ENCODE measurements at regions of chr17 and their contacts with region 1.

Region 1: DNA sequence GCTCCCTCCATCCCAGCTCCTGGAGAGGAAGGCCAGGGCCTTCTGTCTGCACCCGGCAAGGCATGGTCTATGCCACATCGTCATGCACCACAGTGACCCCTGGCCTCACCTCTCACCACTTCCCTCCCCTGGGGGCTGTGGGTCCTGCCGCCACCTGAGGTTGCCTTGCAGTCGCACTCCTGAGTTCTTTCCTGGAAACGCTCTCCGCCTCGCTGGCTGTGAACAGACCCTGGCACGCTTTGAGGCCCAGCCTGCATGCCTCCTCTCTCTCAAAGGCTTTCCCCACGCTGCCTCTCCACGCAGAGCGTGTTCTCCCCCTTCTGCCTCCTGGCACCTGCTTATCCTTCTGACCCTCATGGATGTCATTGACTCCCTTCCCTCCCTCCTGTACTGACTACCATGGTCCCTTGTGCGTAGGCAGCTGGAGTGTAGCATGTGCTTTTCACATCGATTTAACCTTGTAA is 45.4 kb downstream of the SEC14L1 start:
- DNase-seq: no peak
- ATAC-seq: no peak; the same call in 1 of the 3 replicates
- H3K4me3 ChIP-seq: no peak overlapping the region
- H3K27ac ChIP-seq: peak overlapping the region; percentile 54
- H3K4me1 ChIP-seq: peaks cover 68% of the 10 kb centered on the region
- H3K27me3 ChIP-seq: no peaks in the 10 kb centered on the region
- CTCF ChIP-seq: no peak
- EP300 ChIP-seq: no peak
- POLR2A ChIP-seq: no peak
- RAD21 ChIP-seq: no peak

Region 2: GRCh38 chr17:77096570-77097214 is 89.5 kb before region 1 on chr17:
- CTCF ChIA-PET with region 1: interaction called, 3 read pairs
- POLR2A ChIA-PET with region 1: no interaction called
- RAD21 ChIA-PET with region 1: interaction called, 4 read pairs
- SMC1A ChIA-PET with region 1: interaction called, 5 read pairs
- in situ Hi-C with region 1: no loop called
- intact Hi-C with region 1: loop called (anchors 5 kb)
- DNase-seq: no peak
- ATAC-seq: peak; percentile 85
- H3K4me3 ChIP-seq: no peak overlapping the region
- H3K27ac ChIP-seq: 0 out of 2 replicates have a peak overlapping the region, but pooled peaks have one; percentile 33
- H3K4me1 ChIP-seq: peaks cover 4% of the 10 kb centered on the region
- H3K27me3 ChIP-seq: no peaks in the 10 kb centered on the region
- CTCF ChIP-seq: peak; percentile 74 to 83 (median 76)
- EP300 ChIP-seq: no peak
- POLR2A ChIP-seq: no peak
- RAD21 ChIP-seq: peak; percentile 91

Region 3: GRCh38 chr17:77140166-77140878 is 45.9 kb before region 1 on chr17:
- CTCF ChIA-PET with region 1: interaction called, 6 read pairs
- POLR2A ChIA-PET with region 1: interaction called, 16 read pairs
- RAD21 ChIA-PET with region 1: interaction called, 28 read pairs
- SMC1A ChIA-PET with region 1: interaction called, 21 read pairs
- in situ Hi-C with region 1: no loop called
- intact Hi-C with region 1: no loop called
- DNase-seq: peak; percentile 93
- ATAC-seq: peak; percentile 83
- H3K4me3 ChIP-seq: peak overlapping the region; percentile 34
- H3K27ac ChIP-seq: peak overlapping the region; percentile 84
- H3K4me1 ChIP-seq: peaks cover 17% of the 10 kb centered on the region
- H3K27me3 ChIP-seq: no peaks in the 10 kb centered on the region
- CTCF ChIP-seq: no peak
- EP300 ChIP-seq: peak; percentile 58 to 70; a peak in 2 of 4 replicates
- POLR2A ChIP-seq: peak; percentile 88
- RAD21 ChIP-seq: peak; percentile 12; the same call in 1 of the 2 replicates

Region 4: DNA sequence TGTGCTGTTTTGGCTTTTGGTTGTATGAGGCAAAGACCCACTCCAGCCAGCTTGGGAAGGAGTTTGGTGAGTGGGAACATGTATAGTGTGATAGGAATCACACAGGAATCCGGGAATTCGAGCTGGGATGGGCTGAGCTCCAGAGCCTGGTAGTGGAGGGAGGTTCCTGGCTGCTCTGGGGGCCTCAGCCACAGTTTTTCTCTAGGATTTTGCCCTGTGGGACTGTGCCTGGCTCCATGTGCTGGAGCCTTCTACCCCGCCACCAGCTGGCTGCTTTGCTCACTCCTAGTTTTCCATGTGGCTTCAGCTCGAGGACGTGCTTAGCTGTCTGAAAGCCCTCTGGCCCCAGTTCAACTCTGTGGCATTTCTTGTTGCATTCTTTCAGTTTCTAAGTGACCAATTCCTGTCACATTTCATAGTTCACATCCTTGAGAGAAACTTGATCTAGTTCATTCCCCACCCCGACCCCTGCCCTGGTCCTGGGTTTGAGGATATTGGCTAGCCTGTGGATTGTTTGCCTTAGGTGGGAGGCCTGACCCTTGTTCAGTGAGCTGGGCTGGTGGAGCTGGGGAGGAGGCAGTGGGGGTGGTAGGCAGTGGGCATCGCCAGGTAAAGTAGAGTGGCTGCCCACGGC is 40.4 kb before region 1 on chr17:
- CTCF ChIA-PET with region 1: interaction called, 6 read pairs
- POLR2A ChIA-PET with region 1: interaction called, 16 read pairs
- RAD21 ChIA-PET with region 1: interaction called, 28 read pairs
- SMC1A ChIA-PET with region 1: interaction called, 21 read pairs
- in situ Hi-C with region 1: no loop called
- intact Hi-C with region 1: loop called (anchors 2 kb)
- DNase-seq: peak; percentile 71
- ATAC-seq: peak; percentile 63
- H3K4me3 ChIP-seq: peak overlapping the region; percentile 69
- H3K27ac ChIP-seq: peak overlapping the region; percentile 97
- H3K4me1 ChIP-seq: peaks cover 43% of the 10 kb centered on the region
- H3K27me3 ChIP-seq: no peaks in the 10 kb centered on the region
- CTCF ChIP-seq: peak in 2 of 3 experiments; percentile 8 to 22; a peak in 1 of 6 replicates
- EP300 ChIP-seq: peak in 1 of 2 experiments; percentile 56; a peak in 2 of 4 replicates
- POLR2A ChIP-seq: 0 out of 2 replicates have a peak, but pooled peaks have one; percentile 32
- RAD21 ChIP-seq: no peak

Region 5: DNA sequence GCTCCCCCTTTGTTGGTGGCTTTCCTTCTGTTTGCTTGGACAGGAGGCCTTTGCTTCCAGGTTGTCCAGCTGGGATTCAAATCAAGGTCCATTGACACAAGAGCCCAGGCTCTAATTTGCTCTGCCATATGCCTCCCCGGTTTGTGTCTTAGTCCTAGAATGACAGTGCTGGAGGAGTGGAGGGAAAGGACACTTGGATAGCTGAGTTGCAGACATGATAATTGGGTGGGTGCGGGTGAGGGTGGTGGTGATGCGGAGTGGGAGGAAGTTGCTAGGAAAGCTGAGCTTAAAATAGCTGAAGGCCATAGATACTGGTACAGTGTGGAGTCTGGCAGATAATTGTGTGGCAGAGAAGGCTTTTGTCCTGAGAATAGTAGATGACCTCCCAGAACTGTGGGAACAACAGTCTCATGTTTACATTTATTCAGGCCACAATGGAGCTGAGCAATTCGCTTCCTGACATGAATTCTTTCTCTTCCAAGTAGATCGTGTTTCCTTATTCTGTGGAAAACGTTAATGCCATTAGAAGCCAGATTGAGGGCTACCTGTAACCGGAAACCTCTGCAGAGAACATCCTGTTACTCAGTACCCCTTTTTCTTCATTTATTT is 21.6 kb before region 1 on chr17:
- CTCF ChIA-PET with region 1: interaction called, 4 read pairs
- POLR2A ChIA-PET with region 1: interaction called, 6 read pairs
- RAD21 ChIA-PET with region 1: interaction called, 6 read pairs
- SMC1A ChIA-PET with region 1: interaction called, 25 read pairs
- in situ Hi-C with region 1: no loop called
- intact Hi-C with region 1: no loop called
- DNase-seq: no peak
- ATAC-seq: no peak
- H3K4me3 ChIP-seq: no peak overlapping the region; the same call in 1 of the 2 replicates
- H3K27ac ChIP-seq: peak overlapping the region; percentile 28; the same call in 1 of the 2 replicates
- H3K4me1 ChIP-seq: peaks cover 14% of the 10 kb centered on the region
- H3K27me3 ChIP-seq: no peaks in the 10 kb centered on the region
- CTCF ChIP-seq: no peak
- EP300 ChIP-seq: no peak
- POLR2A ChIP-seq: no peak
- RAD21 ChIP-seq: no peak

Measured in GM12878 (cell line).